ENCODE measurements at regions of chr11 and their contacts with region 1.

Region 1: DNA sequence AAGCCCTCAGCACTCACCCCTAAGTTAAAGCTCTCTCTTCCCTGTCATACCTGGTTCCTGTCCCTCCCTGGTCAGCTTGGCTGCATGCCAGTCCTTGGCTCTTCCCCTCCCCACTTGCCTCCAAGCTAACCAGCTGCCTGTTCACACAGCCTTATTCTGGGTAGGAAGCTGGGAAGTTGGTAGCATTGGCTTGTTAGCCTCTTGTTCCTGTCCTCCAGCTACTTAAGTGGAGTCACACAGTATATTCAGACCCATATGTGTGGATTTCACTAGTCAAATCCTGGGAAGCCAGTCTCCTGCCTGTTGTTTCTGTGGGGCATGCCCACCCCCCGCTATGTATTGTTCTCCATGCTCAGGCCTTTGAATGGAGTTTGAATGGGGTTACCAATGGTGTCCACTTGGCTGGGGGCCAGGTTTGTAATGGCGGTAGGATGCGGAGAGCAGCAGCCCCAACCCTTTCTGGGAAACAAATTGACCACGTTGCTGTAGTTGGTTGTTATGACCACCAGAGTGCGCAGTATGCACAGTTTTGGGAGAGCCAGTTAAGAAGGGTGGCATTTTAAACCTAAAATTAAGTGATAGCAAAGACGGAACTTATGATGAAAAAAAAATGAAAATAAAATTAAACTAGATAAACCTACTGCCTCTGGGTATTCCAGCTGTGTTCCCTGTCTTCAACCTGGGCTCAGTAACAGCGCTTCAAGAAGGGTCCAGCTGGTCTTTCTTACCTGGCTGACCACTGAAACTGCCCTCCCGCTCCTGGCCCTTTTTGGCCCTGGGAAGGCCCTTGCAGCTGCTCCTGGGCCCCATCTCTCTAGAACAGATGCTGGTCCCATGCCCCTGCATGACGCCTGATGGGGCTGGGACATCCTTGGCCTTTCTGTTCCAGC is 10.7 kb upstream of the RPS3 start:
- DNase-seq: peak; percentile 73
- ATAC-seq: peak; percentile 80

Region 2: DNA sequence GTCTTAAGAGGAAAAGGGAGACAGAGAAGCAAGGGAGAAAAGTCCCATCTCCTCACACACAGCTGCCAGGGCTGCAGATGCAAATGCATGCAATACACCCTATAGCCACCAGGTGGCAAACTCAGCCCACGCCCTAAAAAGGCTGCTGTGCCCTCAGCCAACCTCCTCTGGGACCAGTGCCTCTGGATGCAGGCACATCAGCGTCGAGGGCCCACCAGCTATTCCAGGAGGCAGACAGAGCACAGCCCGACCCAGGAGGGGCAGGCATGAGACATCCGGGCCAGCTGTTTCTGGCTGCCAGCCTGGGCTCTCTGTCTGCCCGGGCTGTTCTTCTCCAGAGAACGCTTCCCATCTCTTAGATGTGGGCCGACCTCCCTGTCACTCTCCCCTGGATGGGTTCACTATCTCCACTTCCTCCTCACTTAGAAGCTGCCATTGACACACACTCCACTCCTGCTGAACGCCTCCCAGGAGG is 108.4 kb before region 1 on chr11:
- intact Hi-C with region 1: loop called (anchors 1 kb)
- DNase-seq: peak; percentile 83
- ATAC-seq: peak; percentile 91

Region 3: DNA sequence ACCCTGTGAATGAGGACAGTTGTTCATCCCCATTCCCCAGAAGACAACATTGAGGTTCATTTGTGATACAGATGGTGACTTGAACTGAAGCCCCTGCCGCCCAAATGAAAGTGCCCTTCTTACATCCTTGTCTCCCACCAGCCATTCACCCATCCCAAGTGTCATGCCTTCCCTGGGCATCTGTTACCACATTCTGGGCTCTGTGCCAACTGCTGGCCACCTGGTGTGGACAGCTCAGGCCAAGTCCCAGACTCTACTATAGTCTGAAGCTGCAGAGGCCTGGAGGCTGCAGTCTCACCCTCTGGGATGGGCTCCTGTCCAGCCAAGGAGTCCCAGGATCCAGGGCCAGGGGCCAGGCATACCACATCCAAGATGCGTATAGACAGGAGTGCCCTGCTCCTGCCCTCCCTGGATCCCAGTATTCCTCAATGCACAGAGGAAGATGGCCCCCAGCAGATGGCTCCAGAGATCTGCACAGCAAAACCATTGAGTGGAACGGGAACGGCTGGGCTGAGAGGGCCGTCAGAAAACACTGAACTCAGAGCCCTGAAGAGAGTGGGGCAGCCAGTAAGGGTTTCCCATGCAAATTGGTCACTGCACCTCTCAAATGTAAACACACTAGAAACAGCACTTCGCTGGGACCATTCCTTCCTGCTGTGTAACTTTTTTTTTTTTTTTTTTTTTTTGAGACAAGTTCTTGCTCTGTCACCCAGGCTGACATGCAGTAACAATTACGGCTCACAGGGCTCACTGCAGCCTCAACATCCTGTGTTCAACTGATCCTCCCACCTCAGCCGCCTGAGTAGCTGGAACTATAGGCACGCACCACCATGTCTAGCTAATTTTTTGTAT is 60.0 kb before region 1 on chr11:
- intact Hi-C with region 1: loop called (anchors 2 kb)
- DNase-seq: peak; percentile 76
- ATAC-seq: peak; percentile 86